Activated B cell treated with CpG ODN at 0.5 μM for 24 hours (primary cell): ENCODE measurements at regions of chr19 and their contacts with region 1.

Region 1: GRCh38 chr19:19821366-19821951 is at the start of gene ZNF506:
- DNase-seq: peak; percentile 85
- ATAC-seq: peak; percentile 87
- H3K4me3 Mint-ChIP-seq: peak within 1 kb of the TSS; percentile 98
- H3K27ac Mint-ChIP-seq: peak within 1 kb of the TSS; percentile 99
- H3K4me1 Mint-ChIP-seq: peaks cover 65% of the 10 kb centered on the region
- H3K27me3 Mint-ChIP-seq: no peaks in the 10 kb centered on the region
- CTCF ChIP-seq: no peak
- total RNA-seq, gene ZNF506: 67.1 and 78.6 TPM in 2 replicates

Region 2: DNA sequence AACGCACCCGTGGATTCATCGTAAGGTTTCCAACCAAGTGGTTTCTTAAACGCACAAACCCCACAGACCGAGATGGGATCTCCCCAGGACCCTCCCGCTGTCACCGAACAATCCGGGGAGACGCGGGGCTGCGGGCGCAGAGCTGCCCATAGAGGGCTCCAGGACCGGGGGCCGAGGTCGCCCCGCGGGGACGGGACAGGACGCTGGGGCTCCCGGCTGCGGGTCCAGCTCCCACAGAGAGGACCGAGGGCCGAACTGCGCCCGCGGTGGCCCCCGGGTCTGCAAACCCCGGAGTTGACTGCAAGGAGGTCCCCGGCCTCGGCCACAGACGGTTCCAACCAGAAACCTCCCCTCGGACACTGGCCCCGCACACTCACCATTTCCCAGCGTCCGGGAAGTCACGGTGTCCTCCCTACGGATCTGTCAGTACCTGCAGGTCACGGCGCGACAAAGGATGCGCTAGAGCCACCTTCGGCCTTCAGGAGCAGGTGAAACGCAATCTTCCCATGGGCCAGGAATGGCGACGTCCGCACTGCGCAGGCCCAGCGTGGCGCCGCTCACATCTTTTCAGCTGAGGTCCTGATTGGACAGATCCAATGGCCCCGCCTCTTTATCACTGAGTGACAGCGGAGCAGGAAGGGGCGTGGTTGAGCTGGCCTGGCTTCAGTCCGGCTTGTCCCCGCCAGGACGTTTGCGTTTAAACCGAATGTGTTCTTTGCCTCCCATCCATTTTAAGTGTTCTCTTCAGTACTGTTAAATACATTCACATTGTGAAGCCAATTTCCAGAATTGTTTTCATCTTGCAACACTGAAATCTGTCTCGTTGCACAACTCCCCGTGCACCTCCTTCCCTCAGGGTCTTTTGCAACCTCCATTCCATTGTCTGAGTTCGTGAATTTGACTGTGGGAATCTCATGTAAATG is 88.6 kb before region 1 on chr19 and contains the start of gene ZNF14:
- CTCF ChIA-PET with region 1: no interaction called
- POLR2A ChIA-PET with region 1: interaction called, 18 read pairs
- intact Hi-C with region 1: loop called (anchors 2 kb)
- DNase-seq: peak; percentile 79
- ATAC-seq: peak; percentile 99
- H3K4me3 Mint-ChIP-seq: peak within 1 kb of the TSS; percentile 99
- H3K27ac Mint-ChIP-seq: peak within 1 kb of the TSS; percentile 96
- H3K4me1 Mint-ChIP-seq: peaks cover 28% of the 10 kb centered on the region
- H3K27me3 Mint-ChIP-seq: no peaks in the 10 kb centered on the region
- CTCF ChIP-seq: no peak
- total RNA-seq, gene ZNF14: 11.8 and 13.4 TPM in 2 replicates

Region 3: DNA sequence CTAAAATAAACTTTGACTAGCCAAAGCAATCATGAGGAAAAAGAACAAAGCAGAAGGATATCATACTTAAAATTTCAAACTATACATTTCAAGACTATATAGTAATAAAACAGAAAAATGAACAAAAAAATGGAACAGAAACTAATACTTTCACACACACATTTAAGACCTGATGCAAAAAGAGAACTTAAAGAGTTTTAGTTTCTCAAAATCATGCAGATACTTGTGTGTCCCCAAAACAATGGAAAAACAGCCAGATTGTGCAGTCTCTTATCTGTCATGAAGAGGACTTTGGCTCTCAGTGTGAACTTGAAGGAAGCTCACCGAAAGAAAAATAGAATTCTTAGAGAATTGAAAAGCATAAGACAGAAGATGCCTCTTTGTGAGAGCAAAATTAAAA is 16.0 kb before region 1 on chr19:
- CTCF ChIA-PET with region 1: no interaction called
- POLR2A ChIA-PET with region 1: interaction called, 14 read pairs
- intact Hi-C with region 1: loop called (anchors 2 kb)
- DNase-seq: no peak
- ATAC-seq: no peak
- H3K4me3 Mint-ChIP-seq: no peak overlapping the region
- H3K27ac Mint-ChIP-seq: peak overlapping the region; percentile 50
- H3K4me1 Mint-ChIP-seq: peaks cover 50% of the 10 kb centered on the region
- H3K27me3 Mint-ChIP-seq: no peaks in the 10 kb centered on the region
- CTCF ChIP-seq: no peak

Region 4: DNA sequence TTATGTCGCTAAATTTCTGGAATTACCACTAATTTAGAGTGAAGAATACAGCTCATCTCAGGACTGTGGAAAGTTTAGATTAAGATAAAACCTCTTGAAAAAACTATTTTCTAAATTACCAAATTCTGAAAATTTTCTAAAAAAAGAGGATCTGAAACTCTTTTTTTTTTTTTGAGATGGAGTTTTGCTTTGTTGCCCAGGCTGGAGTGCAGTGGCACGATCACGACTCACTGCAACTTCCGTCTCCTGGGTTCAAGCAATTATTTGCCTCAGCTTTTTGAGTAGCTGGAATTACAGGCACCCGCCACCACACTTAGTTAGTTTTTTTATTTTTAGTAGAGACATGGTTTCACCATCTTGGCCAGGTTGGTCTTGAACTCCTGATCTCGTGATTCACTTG is 27.6 kb after region 1 on chr19:
- CTCF ChIA-PET with region 1: no interaction called
- POLR2A ChIA-PET with region 1: interaction called, 12 read pairs
- intact Hi-C with region 1: no loop called
- DNase-seq: no peak
- ATAC-seq: peak; percentile 58
- H3K4me3 Mint-ChIP-seq: peak overlapping the region; percentile 15
- H3K27ac Mint-ChIP-seq: peak overlapping the region; percentile 59
- H3K4me1 Mint-ChIP-seq: peaks cover 24% of the 10 kb centered on the region
- H3K27me3 Mint-ChIP-seq: no peaks in the 10 kb centered on the region
- CTCF ChIP-seq: no peak

Region 5: DNA sequence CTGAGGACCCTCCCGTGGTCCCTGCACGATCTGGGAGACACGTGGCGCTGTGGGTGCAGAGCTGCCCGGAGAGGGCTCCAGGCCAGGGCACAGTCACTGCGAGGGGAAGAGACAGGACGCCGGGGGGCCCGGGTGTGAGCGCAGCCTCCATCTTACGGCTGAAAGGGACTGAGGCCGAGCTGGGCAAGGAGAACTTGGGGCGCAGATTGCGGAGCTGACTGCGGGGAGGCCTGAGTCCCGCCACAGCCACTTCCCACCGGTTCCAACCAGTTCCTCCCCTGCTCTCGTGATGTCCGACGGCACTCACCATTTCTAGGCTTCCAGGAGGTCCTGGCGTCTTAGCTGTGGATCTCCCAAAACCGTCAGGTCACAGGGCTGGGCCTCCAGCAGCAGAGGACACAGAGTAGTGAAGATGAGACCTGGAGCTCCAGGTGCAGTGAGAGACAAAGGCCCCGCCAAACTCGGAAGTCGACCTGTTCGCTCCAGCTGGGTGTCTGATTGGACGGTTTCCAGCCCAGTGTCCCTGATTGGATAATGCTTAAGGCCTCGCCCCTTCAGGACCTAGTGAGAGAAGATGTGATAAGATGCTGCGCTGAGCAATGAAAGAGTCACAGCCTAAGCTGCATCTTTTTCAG is 39.4 kb after region 1 on chr19:
- CTCF ChIA-PET with region 1: interaction called, 11 read pairs
- POLR2A ChIA-PET with region 1: interaction called, 107 read pairs
- intact Hi-C with region 1: loop called (anchors 1 kb)
- DNase-seq: peak; percentile 30
- ATAC-seq: peak; percentile 58
- H3K4me3 Mint-ChIP-seq: peak overlapping the region; percentile 90
- H3K27ac Mint-ChIP-seq: peak overlapping the region; percentile 81
- H3K4me1 Mint-ChIP-seq: peaks cover 31% of the 10 kb centered on the region
- H3K27me3 Mint-ChIP-seq: no peaks in the 10 kb centered on the region
- CTCF ChIP-seq: no peak

Region 6: DNA sequence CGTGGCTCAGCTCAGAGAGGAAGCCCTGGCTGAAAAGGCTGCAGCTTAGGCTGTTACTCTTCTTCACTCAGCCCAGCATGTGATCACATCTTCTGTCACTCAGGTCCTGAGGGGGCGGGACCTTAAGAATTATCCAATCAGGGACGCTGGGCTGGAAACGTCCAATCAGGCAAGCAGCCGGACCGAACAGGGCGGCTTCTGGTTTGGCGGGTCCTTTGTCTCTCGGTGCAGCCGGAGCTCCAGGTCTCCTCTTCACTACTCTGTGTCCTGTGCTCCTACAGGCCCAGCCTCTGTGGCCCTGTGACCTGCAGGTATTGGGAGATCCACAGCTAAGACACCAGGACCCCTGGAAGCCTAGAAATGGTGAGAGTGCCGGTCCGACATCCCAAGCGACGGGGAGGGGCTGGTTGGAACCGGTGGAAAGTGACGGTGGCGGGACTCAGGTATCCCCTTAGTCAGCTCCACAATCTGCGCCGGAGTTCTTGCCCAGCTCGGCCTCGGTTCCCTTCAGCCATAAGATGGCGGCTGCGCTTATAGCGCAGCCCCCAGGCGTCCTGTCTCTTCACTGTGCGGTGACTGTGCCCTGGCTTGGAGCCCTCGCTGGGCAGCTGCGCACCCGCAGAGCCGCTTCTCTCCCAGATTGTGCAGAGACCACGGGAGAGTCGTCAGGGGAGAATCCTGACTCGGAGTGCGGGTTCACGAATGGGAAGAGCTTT is 79.4 kb after region 1 on chr19 and contains the start of gene ZNF93:
- CTCF ChIA-PET with region 1: no interaction called
- POLR2A ChIA-PET with region 1: interaction called, 48 read pairs
- intact Hi-C with region 1: loop called (anchors 1 kb)
- DNase-seq: peak; percentile 74
- ATAC-seq: peak; percentile 97
- H3K4me3 Mint-ChIP-seq: peak within 1 kb of the TSS; percentile 98
- H3K27ac Mint-ChIP-seq: peak within 1 kb of the TSS; percentile 91
- H3K4me1 Mint-ChIP-seq: peaks cover 34% of the 10 kb centered on the region
- H3K27me3 Mint-ChIP-seq: no peaks in the 10 kb centered on the region
- CTCF ChIP-seq: no peak
- total RNA-seq, gene ZNF93: 13.5 and 14.9 TPM in 2 replicates

Region 7: DNA sequence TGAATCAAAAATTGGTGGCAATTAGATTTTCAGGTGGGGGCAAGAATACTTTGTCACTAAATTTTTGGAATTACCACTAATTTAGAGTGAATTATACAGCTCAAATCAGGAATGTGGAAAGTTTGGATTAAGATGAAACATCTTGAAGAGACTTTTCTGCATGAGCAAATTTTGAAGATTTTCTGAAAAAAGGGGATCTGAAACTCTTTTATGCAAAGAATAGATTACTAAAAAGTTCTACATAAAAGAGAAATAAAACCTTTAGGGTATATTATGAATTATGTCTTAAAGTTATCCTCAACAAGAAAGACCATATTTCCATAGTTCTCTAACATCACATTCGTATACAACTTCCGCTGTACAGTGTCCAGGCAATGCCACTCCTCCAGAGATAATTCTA is 115.9 kb after region 1 on chr19:
- CTCF ChIA-PET with region 1: interaction called, 3 read pairs
- POLR2A ChIA-PET with region 1: interaction called, 3 read pairs
- intact Hi-C with region 1: loop called (anchors 2 kb)
- DNase-seq: no peak
- ATAC-seq: no peak
- H3K4me3 Mint-ChIP-seq: peak overlapping the region; percentile 11
- H3K27ac Mint-ChIP-seq: peak overlapping the region; percentile 46
- H3K4me1 Mint-ChIP-seq: peaks cover 18% of the 10 kb centered on the region
- H3K27me3 Mint-ChIP-seq: no peaks in the 10 kb centered on the region
- CTCF ChIP-seq: no peak